AG04450 (cell line): ENCODE measurements at regions of chr7 and their contacts with region 1.

Region 1: GRCh38 chr7:79176859-79177477 is 276.5 kb downstream of the MAGI2 start:
- DNase-seq: peak; percentile 26
- H3K4me3 ChIP-seq: no peak overlapping the region
- H3K27ac ChIP-seq: no peak overlapping the region
- H3K27me3 ChIP-seq: no peaks in the 10 kb centered on the region
- CTCF ChIP-seq: peak; percentile 79

Region 2: DNA sequence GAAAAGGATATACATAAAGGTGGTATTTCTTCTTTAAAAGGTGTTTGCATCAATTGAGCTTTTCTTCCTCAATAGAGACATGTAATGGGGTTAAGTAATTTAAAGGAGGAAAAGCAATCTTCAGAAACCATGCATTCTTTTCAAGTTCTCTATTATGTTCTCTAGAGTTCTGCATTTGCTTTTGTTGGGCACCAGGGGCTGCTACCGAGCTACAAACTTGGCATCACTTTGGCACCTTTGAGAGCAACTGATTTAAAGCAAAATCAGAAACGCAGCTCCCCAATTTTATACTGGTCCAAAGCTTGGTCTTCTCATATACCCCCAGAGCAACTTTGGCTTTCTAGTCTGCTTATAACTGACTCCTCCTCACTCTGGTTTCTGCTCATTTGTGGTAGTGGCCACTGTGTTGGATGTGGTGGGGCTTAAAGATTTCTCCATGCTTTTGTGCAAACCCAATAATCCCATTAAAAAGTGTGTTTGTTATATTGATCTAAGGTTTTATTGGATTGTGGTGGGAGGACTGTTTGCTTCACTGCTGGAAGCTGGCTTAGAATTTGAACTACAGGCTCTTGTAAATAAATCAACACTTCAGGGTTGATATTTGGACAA is 666.3 kb before region 1 on chr7:
- CTCF ChIA-PET with region 1: interaction called, 23 read pairs
- POLR2A ChIA-PET with region 1: no interaction called
- DNase-seq: peak; percentile 29
- H3K4me3 ChIP-seq: no peak overlapping the region
- H3K27ac ChIP-seq: no peak overlapping the region
- H3K27me3 ChIP-seq: no peaks in the 10 kb centered on the region
- CTCF ChIP-seq: peak; percentile 95

Region 3: DNA sequence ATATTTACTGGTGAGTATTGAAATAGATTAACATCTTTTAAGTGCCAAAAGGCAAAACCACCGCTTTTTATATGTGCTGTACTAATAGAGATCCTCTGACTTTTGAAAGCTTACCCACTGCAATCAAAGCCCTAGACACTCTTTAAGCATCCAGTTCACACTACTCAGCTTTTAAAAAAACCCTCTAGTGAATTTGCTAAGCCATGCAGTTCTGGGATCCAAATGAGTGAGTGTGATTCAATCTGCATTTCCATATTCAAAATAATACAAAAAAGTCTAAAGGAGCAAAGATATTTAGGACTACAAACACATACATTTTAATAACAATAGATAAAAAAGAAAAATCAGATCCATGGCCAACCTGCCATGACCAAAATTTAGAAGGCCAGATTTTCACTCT is 11.7 kb before region 1 on chr7:
- CTCF ChIA-PET with region 1: interaction called, 15 read pairs
- POLR2A ChIA-PET with region 1: no interaction called
- DNase-seq: no peak
- H3K4me3 ChIP-seq: no peak overlapping the region
- H3K27ac ChIP-seq: no peak overlapping the region
- H3K27me3 ChIP-seq: no peaks in the 10 kb centered on the region
- CTCF ChIP-seq: no peak